ENCODE measurements at regions of chr3 and their contacts with region 1.

Region 1: DNA sequence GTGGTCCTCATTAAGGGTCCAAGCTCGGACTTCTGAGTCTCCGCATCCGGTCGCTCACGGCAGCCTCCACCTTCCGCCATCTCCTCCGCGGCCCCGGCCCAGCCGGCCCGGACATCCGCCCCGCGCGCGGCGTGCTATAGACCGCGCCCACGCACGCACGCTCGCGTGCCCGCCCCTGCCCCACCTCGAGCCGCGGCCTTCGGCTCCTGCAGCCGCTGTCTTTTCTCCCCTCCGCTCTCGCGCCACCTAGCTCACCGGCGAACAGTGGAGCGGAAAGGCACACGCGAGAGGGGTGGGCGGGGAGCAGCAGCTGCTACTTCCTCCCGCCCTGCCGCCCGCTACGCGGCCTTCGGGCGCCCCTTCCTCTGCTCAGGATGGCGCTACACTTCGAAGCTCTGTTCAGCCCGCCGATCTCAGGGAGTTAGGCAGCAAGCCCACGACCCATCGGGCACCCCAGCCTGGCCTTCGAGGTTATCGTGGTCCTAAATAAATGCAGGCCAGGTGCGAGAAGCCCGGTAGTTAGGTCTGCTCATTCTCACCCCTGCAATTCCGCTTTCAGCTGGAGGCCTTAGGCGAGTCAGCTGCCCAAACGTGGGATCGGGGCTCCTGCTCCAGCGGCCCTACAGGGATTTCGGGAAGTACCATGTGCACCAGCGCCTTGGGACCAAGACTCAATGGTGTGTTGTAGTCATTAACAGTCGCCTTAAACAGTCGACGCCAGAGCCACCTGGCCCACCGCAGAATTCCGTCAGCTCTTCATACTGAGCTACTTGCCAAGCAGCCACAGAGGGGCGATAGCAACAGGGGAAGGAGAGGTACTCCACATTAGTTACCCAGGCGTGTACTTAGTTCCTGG is at the start of gene USP4:
- DNase-seq: peak; percentile 98
- H3K4me3 Mint-ChIP-seq: peak within 1 kb of the TSS; percentile 97
- H3K27ac Mint-ChIP-seq: peak within 1 kb of the TSS; percentile 98
- H3K4me1 Mint-ChIP-seq: peaks cover 43% of the 10 kb centered on the region
- H3K27me3 Mint-ChIP-seq: no peaks in the 10 kb centered on the region
- total RNA-seq, gene USP4: 94.0 and 96.9 TPM in 2 replicates

Region 2: GRCh38 chr3:49165771-49166751 is 174.1 kb before region 1 on chr3 and contains the start of gene CCDC71:
- intact Hi-C with region 1: loop called (anchors 10 kb)
- DNase-seq: peak; percentile 94
- H3K4me3 Mint-ChIP-seq: peak within 1 kb of the TSS; percentile 95
- H3K27ac Mint-ChIP-seq: peak within 1 kb of the TSS; percentile 92
- H3K4me1 Mint-ChIP-seq: peaks cover 24% of the 10 kb centered on the region
- H3K27me3 Mint-ChIP-seq: no peaks in the 10 kb centered on the region
- total RNA-seq, gene CCDC71: 25.7 and 26.7 TPM in 2 replicates

Region 3: GRCh38 chr3:49358217-49358883 is 18.2 kb after region 1 on chr3 and contains the start of gene GPX1:
- intact Hi-C with region 1: loop called (anchors 1 kb)
- DNase-seq: peak; percentile 96
- H3K4me3 Mint-ChIP-seq: peak within 1 kb of the TSS; percentile 95
- H3K27ac Mint-ChIP-seq: peak within 1 kb of the TSS; percentile 97
- H3K4me1 Mint-ChIP-seq: peaks cover 21% of the 10 kb centered on the region
- H3K27me3 Mint-ChIP-seq: no peaks in the 10 kb centered on the region
- total RNA-seq, gene GPX1: 190 and 200 TPM in 2 replicates

Region 4: GRCh38 chr3:49428697-49429100 is 88.5 kb after region 1 on chr3:
- intact Hi-C with region 1: loop called (anchors 1 kb)
- DNase-seq: no peak
- H3K4me3 Mint-ChIP-seq: peak overlapping the region; percentile 93
- H3K27ac Mint-ChIP-seq: peak overlapping the region; percentile 94
- H3K4me1 Mint-ChIP-seq: peaks cover 8% of the 10 kb centered on the region
- H3K27me3 Mint-ChIP-seq: no peaks in the 10 kb centered on the region

Region 5: GRCh38 chr3:49454458-49454857 is 114.3 kb after region 1 on chr3:
- intact Hi-C with region 1: loop called (anchors 1 kb)
- DNase-seq: no peak
- H3K4me3 Mint-ChIP-seq: no peak overlapping the region
- H3K27ac Mint-ChIP-seq: no peak overlapping the region
- H3K4me1 Mint-ChIP-seq: no peaks in the 10 kb centered on the region
- H3K27me3 Mint-ChIP-seq: no peaks in the 10 kb centered on the region

Region 6: GRCh38 chr3:50388016-50388719 is 1048.0 kb after region 1 on chr3:
- intact Hi-C with region 1: no loop called
- DNase-seq: no peak
- H3K4me3 Mint-ChIP-seq: no peak overlapping the region
- H3K27ac Mint-ChIP-seq: no peak overlapping the region
- H3K4me1 Mint-ChIP-seq: peaks cover 6% of the 10 kb centered on the region
- H3K27me3 Mint-ChIP-seq: peaks cover 2% of the 10 kb centered on the region

Measured in activated CD4-positive, alpha-beta T cell treated with anti-CD3 and anti-CD28 coated beads, Interleukin-2, amount 10 ng/mL, durations not matched to agents 24 days and 14 days (primary cell).